Activated CD4-positive, alpha-beta memory T cell treated with anti-CD3 and anti-CD28 coated beads for 36 hours (primary cell): ENCODE measurements at regions of chrX and their contacts with region 1.

Region 1: GRCh38 chrX:20452487-20452886 is 185.8 kb upstream of the RPS6KA3 start:
- DNase-seq: no peak
- H3K4me3 Mint-ChIP-seq: peak overlapping the region; percentile 12
- H3K27ac Mint-ChIP-seq: peak overlapping the region; percentile 18
- H3K4me1 Mint-ChIP-seq: peaks cover 32% of the 10 kb centered on the region
- H3K27me3 Mint-ChIP-seq: no peaks in the 10 kb centered on the region

Region 2: GRCh38 chrX:20437683-20438082 is 14.8 kb before region 1 on chrX:
- CTCF ChIA-PET with region 1: no interaction called
- POLR2A ChIA-PET with region 1: no interaction called
- intact Hi-C with region 1: no loop called
- DNase-seq: no peak
- H3K4me3 Mint-ChIP-seq: no peak overlapping the region
- H3K27ac Mint-ChIP-seq: no peak overlapping the region
- H3K4me1 Mint-ChIP-seq: peaks cover 55% of the 10 kb centered on the region
- H3K27me3 Mint-ChIP-seq: no peaks in the 10 kb centered on the region

Region 3: DNA sequence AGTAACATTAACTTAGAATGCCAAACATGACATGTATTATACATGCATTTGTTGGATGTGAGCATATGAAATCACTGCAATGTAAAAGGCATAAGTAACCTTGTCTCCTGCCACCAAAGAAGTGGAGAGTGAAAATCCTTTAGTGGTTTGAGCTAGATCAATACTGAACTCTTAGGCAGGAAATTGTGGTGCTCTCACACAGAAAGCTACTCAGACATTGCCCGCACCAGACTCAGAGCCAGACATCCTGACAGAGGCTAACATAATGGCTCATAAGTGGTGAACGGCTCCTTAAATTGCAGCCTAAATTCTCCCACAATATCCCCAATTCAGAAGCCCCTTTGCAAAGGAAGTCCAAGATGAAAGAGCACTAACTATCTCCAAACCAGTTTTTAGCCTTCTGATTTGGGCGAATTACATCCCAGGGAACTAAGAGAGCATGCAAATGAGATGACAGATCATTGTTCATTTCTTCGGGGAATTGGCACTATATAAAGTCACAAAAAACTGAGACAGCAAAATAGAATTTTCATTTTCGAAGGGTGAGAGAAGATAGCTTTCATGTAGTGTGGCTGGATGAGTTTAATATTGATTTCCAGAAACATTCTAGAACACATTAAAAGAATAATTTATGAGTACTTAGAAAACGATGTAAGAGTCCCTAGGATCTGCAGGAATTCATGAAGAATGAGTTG is 47.8 kb after region 1 on chrX:
- CTCF ChIA-PET with region 1: no interaction called
- POLR2A ChIA-PET with region 1: no interaction called
- intact Hi-C with region 1: loop called (anchors 2 kb)
- DNase-seq: peak; percentile 43
- H3K4me3 Mint-ChIP-seq: no peak overlapping the region
- H3K27ac Mint-ChIP-seq: no peak overlapping the region
- H3K4me1 Mint-ChIP-seq: peaks cover 14% of the 10 kb centered on the region
- H3K27me3 Mint-ChIP-seq: peaks cover 6% of the 10 kb centered on the region

Region 4: DNA sequence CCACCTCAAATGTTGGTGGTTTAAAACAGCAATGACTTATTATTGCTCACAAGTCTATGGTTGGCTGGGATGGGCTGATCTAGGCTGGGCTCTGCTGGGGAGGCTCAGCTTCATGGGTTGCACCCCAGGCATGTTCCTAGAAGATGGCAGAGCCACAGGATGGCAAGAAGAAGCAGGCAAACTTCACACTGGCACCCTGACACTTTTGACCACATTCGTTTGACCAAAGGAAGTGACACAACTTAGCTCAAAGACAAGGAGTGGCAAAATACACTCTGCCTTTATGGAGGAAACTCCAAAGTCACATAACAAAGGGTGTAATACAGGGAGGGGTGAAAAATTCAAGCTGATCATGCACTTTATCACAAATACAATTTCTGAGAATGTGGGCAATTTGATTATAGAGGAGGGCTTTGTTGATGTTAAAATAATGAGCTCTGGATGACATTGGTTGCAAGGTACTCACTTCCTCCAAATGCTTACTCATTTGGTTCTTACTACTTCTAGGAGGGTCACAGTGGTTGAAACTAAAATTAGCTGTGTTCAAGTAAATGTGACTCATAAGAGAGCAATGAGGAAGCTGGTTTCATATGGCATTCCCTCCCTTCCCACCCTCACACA is 63.5 kb after region 1 on chrX:
- CTCF ChIA-PET with region 1: interaction called, 3 read pairs
- POLR2A ChIA-PET with region 1: interaction called, 5 read pairs
- intact Hi-C with region 1: loop called (anchors 5 kb)
- DNase-seq: peak; percentile 37
- H3K4me3 Mint-ChIP-seq: no peak overlapping the region
- H3K27ac Mint-ChIP-seq: peak overlapping the region; percentile 58
- H3K4me1 Mint-ChIP-seq: peaks cover 34% of the 10 kb centered on the region
- H3K27me3 Mint-ChIP-seq: peaks cover 13% of the 10 kb centered on the region

Region 5: DNA sequence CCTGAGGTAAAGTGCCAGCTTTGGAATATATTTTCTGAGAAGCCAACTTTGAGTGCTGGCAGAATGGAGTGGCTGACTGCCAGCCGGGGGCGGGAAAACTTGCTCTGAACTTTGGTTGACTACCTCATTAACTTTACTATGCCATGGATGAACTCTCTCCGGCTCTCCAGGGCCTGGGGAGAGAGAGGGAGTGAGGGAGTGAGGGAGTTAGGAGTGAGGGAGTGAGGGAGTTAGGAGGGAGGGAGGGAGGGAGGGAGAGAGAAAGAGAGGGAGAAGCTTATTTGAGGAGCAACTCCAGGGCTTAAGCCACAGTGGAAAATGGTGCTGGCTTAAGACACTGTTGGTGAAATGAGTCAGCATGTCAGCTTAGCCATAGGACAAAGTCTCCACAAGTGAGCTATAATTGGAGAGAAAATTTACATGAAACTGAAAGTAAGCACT is 95.1 kb after region 1 on chrX:
- CTCF ChIA-PET with region 1: no interaction called
- POLR2A ChIA-PET with region 1: no interaction called
- intact Hi-C with region 1: no loop called
- DNase-seq: no peak
- H3K4me3 Mint-ChIP-seq: no peak overlapping the region
- H3K27ac Mint-ChIP-seq: no peak overlapping the region
- H3K4me1 Mint-ChIP-seq: no peaks in the 10 kb centered on the region
- H3K27me3 Mint-ChIP-seq: no peaks in the 10 kb centered on the region